AG04450 (cell line): ENCODE measurements at regions of chr14 and their contacts with region 1.

Region 1: DNA sequence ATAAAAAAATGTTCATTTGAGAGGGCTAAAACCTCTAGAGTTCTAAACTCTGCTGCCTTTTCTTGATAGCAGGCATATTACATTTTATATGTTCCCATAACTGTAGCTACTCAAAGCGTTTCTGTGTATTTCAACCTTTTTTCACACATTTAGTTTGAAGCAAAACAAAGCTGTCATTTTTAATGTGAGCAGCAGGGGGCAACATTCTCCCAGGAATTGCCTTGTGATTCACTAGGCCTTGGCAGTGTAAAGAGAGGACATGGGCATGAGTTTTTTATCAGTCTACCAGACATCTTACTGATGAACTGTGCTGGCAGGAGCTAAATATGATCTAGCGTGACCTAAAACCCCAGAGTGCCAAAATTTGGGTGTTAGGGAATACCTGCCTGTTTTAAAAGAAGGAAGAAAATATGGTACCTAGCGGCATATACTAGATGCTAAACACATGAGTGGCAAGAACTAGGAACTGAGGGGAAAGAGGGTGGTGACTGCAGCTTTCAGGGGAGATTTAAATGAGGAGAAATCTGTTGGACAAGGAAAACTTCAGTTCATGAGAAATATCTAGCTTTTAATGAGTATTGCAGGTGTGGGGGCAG is 65.3 kb downstream of the IFT43 start:
- DNase-seq: peak; percentile 21
- H3K4me3 ChIP-seq: no peak overlapping the region
- H3K27ac ChIP-seq: no peak overlapping the region
- H3K27me3 ChIP-seq: no peaks in the 10 kb centered on the region
- CTCF ChIP-seq: peak; percentile 80

Region 2: GRCh38 chr14:74333909-74334308 is 1717.0 kb before region 1 on chr14:
- CTCF ChIA-PET with region 1: no interaction called
- POLR2A ChIA-PET with region 1: no interaction called
- DNase-seq: peak; percentile 62
- H3K4me3 ChIP-seq: no peak overlapping the region
- H3K27ac ChIP-seq: no peak overlapping the region
- H3K27me3 ChIP-seq: peaks cover 9% of the 10 kb centered on the region
- CTCF ChIP-seq: no peak

Region 3: GRCh38 chr14:76034566-76034965 is 16.3 kb before region 1 on chr14:
- CTCF ChIA-PET with region 1: interaction called, 16 read pairs
- POLR2A ChIA-PET with region 1: no interaction called
- DNase-seq: no peak
- H3K4me3 ChIP-seq: no peak overlapping the region
- H3K27ac ChIP-seq: no peak overlapping the region
- H3K27me3 ChIP-seq: no peaks in the 10 kb centered on the region
- CTCF ChIP-seq: no peak

Region 4: GRCh38 chr14:76063327-76063726 is 12.4 kb after region 1 on chr14:
- CTCF ChIA-PET with region 1: interaction called, 11 read pairs
- POLR2A ChIA-PET with region 1: no interaction called
- DNase-seq: no peak
- H3K4me3 ChIP-seq: no peak overlapping the region
- H3K27ac ChIP-seq: no peak overlapping the region
- H3K27me3 ChIP-seq: no peaks in the 10 kb centered on the region
- CTCF ChIP-seq: no peak

Region 5: GRCh38 chr14:76261371-76261811 is 210.5 kb after region 1 on chr14:
- CTCF ChIA-PET with region 1: no interaction called
- POLR2A ChIA-PET with region 1: no interaction called
- DNase-seq: no peak
- H3K4me3 ChIP-seq: no peak overlapping the region
- H3K27ac ChIP-seq: no peak overlapping the region
- H3K27me3 ChIP-seq: no peaks in the 10 kb centered on the region
- CTCF ChIP-seq: no peak

Region 6: GRCh38 chr14:76352639-76353281 is 301.9 kb after region 1 on chr14:
- CTCF ChIA-PET with region 1: interaction called, 192 read pairs
- POLR2A ChIA-PET with region 1: no interaction called
- DNase-seq: no peak
- H3K4me3 ChIP-seq: peak overlapping the region; percentile 37
- H3K27ac ChIP-seq: no peak overlapping the region
- H3K27me3 ChIP-seq: peaks cover 6% of the 10 kb centered on the region
- CTCF ChIP-seq: peak; percentile 75

Region 7: DNA sequence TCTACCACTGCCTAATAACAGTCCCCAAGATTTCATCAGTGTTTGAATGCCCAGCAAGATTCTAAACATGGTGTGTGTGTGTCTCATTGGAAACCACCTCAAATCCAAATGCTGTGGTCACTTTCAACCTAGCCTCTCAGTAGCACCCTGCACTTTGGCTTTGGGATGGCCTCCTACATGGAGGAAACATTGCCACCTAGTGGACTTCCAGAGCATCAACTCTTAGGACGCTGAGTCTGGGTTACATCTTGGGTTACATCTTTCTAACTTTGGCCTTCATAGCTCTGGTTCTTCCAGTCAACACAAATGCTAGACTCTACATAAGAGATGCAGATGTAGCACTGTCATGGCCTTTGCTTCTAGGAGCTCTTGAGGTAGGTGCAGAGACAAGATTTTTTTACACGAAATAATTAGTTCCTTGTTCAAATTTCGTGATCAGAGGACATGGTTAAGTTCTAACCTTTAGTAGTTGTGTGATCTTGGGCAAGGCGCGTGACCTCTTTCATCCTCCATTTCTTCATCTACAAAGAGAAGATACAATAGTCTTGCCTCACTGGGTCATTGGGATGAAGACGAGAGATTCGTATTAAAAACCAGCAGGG is 596.9 kb after region 1 on chr14:
- CTCF ChIA-PET with region 1: interaction called, 11 read pairs
- POLR2A ChIA-PET with region 1: no interaction called
- DNase-seq: peak; percentile 23
- H3K4me3 ChIP-seq: no peak overlapping the region
- H3K27ac ChIP-seq: no peak overlapping the region
- H3K27me3 ChIP-seq: peaks cover 5% of the 10 kb centered on the region
- CTCF ChIP-seq: peak; percentile 87